Panc1 (cell line): ENCODE measurements at regions of chr17 and their contacts with region 1.

Region 1: GRCh38 chr17:45172454-45173286 is 11.0 kb downstream of the HEXIM2 start:
- DNase-seq: no peak
- ATAC-seq: peak; percentile 86
- H3K4me3 ChIP-seq: peak overlapping the region in 1 of 2 experiments; percentile 24; a peak in 2 of 4 replicates
- H3K27ac ChIP-seq: peak overlapping the region; percentile 99
- H3K4me1 ChIP-seq: peaks cover 43% of the 10 kb centered on the region
- H3K27me3 ChIP-seq: no peaks in the 10 kb centered on the region
- CTCF ChIP-seq: no peak

Region 2: DNA sequence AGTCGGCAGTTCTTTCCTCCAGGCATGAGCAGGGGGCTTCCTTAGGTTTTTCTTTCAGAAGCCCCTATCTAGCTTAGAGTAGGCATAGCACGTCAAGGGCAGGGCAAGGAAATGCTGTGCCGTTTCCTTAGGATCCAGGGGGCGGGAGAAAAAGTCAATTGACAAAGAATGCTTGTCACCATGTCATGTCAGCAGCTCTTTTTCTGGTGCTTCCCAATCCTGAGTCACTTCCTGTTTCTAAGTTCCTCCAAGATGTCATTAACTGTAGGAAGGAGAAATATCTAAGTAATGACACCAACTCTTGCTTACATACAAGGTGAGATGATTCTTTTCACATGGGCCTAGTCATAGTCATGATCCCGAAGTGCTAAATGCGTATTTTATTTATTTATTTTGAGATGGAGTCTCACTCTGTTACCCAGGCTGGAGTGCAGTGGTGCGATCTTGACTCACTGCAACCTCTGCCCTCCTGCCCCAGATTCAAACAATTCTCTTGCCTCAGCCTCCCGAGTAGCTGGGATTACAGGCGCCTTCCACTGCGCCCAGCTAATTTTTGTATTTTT is 377.7 kb before region 1 on chr17:
- CTCF ChIA-PET with region 1: interaction called, 11 read pairs
- POLR2A ChIA-PET with region 1: no interaction called
- in situ Hi-C with region 1: no loop called
- intact Hi-C with region 1: no loop called
- DNase-seq: peak; percentile 92
- ATAC-seq: peak; percentile 80
- H3K4me3 ChIP-seq: peak overlapping the region in 1 of 2 experiments; percentile 16; a peak in 1 of 4 replicates
- H3K27ac ChIP-seq: peak overlapping the region; percentile 60
- H3K4me1 ChIP-seq: peaks cover 36% of the 10 kb centered on the region
- H3K27me3 ChIP-seq: no peaks in the 10 kb centered on the region
- CTCF ChIP-seq: no peak

Region 3: DNA sequence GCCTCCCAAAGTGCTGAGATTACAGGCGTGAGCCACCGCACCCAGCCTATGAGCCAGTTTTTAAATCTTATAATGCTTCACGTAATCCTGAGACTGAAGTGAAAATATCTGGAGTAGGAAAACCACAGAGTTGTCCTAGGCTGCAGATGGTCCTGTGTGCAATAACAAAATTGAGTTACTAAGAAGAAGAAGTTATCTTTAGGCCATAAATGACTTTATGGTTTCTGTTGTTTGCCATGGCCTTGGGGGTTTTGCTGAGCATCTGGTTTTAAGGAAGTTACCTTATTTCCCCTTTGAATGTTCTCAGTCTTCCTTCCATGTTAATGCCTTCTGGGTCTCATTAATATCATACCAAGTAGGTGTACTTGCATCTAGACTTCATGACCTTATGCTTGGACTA is 95.0 kb before region 1 on chr17:
- CTCF ChIA-PET with region 1: no interaction called
- POLR2A ChIA-PET with region 1: no interaction called
- in situ Hi-C with region 1: no loop called
- intact Hi-C with region 1: no loop called
- DNase-seq: no peak
- ATAC-seq: no peak
- H3K4me3 ChIP-seq: no peak overlapping the region
- H3K27ac ChIP-seq: no peak overlapping the region
- H3K4me1 ChIP-seq: no peaks in the 10 kb centered on the region
- H3K27me3 ChIP-seq: no peaks in the 10 kb centered on the region
- CTCF ChIP-seq: no peak